ENCODE measurements at regions of chr3 and their contacts with region 1.

Region 1: DNA sequence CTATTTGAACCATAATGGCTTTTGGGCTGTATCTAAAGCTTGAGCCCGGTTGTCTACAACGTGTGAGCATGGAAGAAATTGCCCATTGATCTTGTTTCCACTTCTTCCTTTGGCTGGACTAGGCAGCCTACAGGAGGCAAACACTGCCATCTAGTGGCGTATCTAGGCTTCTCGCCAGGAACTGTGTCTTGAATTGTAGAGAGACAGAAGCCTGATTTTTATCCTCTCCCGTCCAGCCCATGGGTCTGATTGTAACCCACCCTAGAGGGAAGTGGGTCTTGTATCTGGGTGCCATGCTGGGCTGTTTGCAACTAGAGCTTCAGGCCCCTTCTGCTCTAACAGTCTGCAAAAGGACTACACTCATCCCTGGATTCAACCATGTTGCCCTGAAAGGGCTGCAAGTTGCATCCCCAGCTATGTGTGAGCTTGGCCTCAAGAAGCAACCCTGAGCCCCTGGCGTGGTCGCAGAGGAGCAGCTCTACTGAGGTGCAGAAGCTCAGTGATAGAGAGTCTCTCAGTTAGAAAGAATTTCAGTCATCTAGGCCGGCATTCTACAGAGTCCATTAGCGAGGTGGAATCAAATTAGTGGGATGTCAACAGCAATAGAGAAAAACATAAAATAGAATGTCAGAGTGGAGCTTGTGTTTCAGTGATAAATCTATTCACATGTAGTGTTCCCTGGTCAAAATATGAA is 170.2 kb upstream of the UMPS start:
- DNase-seq: peak; percentile 83
- ATAC-seq: peak; percentile 72
- H3K4me3 ChIP-seq: no peak overlapping the region
- H3K27ac ChIP-seq: no peak overlapping the region
- H3K4me1 ChIP-seq: peaks cover 14% of the 10 kb centered on the region
- H3K27me3 ChIP-seq: peaks cover 8% of the 10 kb centered on the region
- CTCF ChIP-seq: peak; percentile 86
- POLR2A ChIP-seq: no peak
- RAD21 ChIP-seq: peak; percentile 83

Region 2: DNA sequence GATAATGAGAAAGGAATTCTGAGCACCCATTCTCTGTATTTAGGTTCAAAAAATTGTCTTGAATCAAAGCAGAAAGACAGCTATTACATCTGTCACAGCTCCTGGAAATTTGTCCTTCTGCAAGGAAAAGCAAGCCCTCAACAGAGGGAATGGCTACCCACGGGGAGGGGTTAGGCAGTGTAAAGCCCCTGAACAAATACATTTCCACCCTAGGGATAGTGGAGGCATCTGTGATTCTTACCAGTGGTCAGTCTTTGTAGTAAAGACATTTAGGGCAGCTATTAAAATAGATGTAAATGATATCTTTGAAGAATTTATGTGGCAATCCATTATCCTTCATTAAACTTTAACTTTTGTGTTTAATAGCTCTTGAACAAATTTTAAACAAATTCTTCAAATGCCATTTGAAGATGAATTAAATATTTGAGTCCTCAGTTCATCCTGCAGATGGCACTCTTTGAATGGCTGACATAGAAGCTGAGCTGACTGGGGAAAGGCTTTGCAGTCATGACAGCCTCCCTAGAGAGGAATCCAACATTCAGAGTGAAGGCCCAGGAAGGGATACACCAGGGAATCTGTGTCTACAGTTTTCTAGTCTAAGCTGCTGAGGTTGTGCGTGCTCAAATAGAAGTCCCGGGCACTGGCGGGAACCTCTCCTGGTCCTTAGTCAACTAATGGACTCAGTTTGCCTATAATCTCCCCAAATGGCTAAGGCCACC is 208.4 kb before region 1 on chr3:
- CTCF ChIA-PET with region 1: interaction called, 3 read pairs
- POLR2A ChIA-PET with region 1: no interaction called
- dilution Hi-C with region 1: no loop called
- in situ Hi-C with region 1: no loop called
- intact Hi-C with region 1: loop called (anchors 2 kb)
- DNase-seq: peak; percentile 78
- ATAC-seq: peak; percentile 96
- H3K4me3 ChIP-seq: no peak overlapping the region
- H3K27ac ChIP-seq: no peak overlapping the region
- H3K4me1 ChIP-seq: no peaks in the 10 kb centered on the region
- H3K27me3 ChIP-seq: peaks cover 7% of the 10 kb centered on the region; the same call in 1 of the 2 replicates
- CTCF ChIP-seq: peak; percentile 75
- POLR2A ChIP-seq: no peak
- RAD21 ChIP-seq: peak; percentile 90

Region 3: DNA sequence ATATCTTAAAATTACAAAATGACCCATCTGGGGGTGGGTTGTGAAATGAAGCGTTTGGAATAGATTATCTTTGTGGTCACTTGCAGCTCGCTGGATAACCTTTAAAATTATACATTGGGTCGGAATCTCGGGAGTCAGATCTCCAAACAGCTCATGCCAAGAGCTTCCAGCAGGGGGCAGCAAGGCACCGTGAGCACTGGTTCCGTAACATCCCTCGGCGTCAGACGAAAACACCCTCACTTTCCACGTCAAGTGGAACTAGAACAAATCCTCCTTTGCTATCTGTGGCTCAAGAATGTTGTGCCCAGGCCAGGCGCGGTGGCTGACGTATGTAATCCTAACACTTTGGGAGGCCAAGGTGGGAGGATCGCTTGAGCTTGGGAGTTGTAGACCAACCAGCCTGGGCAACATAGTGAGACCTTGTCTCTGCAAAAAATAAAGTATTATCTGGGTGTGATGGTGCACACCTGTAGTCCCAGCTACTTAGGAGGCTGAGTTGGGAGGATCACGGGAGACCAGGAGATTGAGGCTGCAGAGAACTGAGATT is 201.3 kb after region 1 on chr3:
- CTCF ChIA-PET with region 1: no interaction called
- POLR2A ChIA-PET with region 1: no interaction called
- dilution Hi-C with region 1: no loop called
- in situ Hi-C with region 1: no loop called
- intact Hi-C with region 1: loop called (anchors 2 kb)
- DNase-seq: peak; percentile 89
- ATAC-seq: peak; percentile 85
- H3K4me3 ChIP-seq: no peak overlapping the region
- H3K27ac ChIP-seq: no peak overlapping the region
- H3K4me1 ChIP-seq: peaks cover 7% of the 10 kb centered on the region
- H3K27me3 ChIP-seq: no peaks in the 10 kb centered on the region
- CTCF ChIP-seq: peak; percentile 96
- POLR2A ChIP-seq: peak; percentile 39; the same call in 1 of the 2 replicates
- RAD21 ChIP-seq: peak; percentile 98

Region 4: GRCh38 chr3:124986158-124987143 is 426.4 kb after region 1 on chr3:
- CTCF ChIA-PET with region 1: no interaction called
- POLR2A ChIA-PET with region 1: no interaction called
- dilution Hi-C with region 1: no loop called
- in situ Hi-C with region 1: no loop called
- intact Hi-C with region 1: loop called (anchors 10 kb)
- DNase-seq: peak; percentile 96
- ATAC-seq: peak; percentile 73
- H3K4me3 ChIP-seq: no peak overlapping the region
- H3K27ac ChIP-seq: peak overlapping the region; percentile 73
- H3K4me1 ChIP-seq: peaks cover 15% of the 10 kb centered on the region
- H3K27me3 ChIP-seq: no peaks in the 10 kb centered on the region
- CTCF ChIP-seq: peak; percentile 41
- POLR2A ChIP-seq: no peak
- RAD21 ChIP-seq: peak; percentile 27; the same call in 1 of the 2 replicates